Gastrocnemius medialis (tissue), 4 donors: ENCODE measurements at regions of chr11 and their contacts with region 1.

Region 1: GRCh38 chr11:2885676-2886081 is at the start of gene CDKN1C:
- DNase-seq: peak; percentile 63 to 82
- ATAC-seq: peak; percentile 76 to 80
- H3K4me3 ChIP-seq: peak within 1 kb of the TSS; percentile 67 to 95 (median 82)
- H3K27ac ChIP-seq: peak within 1 kb of the TSS; percentile 75 to 87 (median 87)
- H3K4me1 ChIP-seq: peaks cover 14 to 26% of the 10 kb centered on the region in 2 donors
- H3K27me3 ChIP-seq: no peaks in the 10 kb centered on the region
- CTCF ChIP-seq: no peak
- POLR2A ChIP-seq: peak; percentile 85 to 95
- total RNA-seq, gene CDKN1C: 22.0 to 56.9 (median 38.5) TPM

Region 2: DNA sequence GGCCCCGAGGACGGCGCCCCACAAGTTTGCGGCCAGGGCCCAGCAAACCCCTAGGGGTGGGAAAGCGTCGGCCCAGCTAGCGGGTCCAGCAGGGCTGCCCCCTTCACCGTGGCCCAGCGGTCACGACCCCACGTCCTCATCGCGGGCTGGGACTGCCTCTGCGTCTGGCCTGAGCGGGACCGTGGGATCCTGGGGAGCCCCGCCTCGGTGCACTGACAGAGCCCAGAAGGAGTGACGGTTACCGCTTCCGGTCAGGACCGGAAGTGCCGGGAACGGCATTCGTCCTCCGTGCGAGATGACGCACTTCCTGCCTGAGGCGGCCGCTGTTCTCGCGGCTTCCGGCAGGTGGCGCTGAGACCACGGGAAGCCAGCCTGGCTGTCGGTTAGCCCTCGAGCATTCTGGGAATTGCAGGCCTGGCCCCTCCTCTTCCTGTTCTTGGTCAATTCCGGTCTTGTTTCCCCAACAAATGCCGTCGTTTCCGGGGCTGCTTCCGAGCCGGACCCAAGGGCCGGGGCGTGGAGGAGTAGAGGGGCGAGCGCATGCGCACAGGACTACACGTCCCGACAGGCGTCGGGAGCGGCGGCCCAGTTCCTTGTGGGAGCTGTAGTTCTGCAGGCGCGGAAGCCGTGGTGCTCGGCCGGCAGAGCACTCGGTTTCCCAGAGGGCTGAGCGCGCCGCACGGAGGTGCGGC is 485.5 kb before region 1 on chr11 and contains the start of gene TSSC4:
- in situ Hi-C with region 1: no loop called
- intact Hi-C with region 1: loop called (anchors 1 kb)
- DNase-seq: peak; percentile 100
- ATAC-seq: peak; percentile 96 to 97
- H3K4me3 ChIP-seq: peak within 1 kb of the TSS; percentile 84 to 100 (median 97)
- H3K27ac ChIP-seq: peak within 1 kb of the TSS; percentile 97 to 100 (median 98)
- H3K4me1 ChIP-seq: peaks cover 22 to 26% of the 10 kb centered on the region in 2 donors
- H3K27me3 ChIP-seq: no peaks in the 10 kb centered on the region
- CTCF ChIP-seq: peak; percentile 95 to 99 (median 98)
- POLR2A ChIP-seq: peak; percentile 91 to 97
- total RNA-seq, gene TSSC4: 53.4 to 92.5 (median 76.8) TPM

Region 3: GRCh38 chr11:2532704-2533586 is 352.7 kb before region 1 on chr11:
- in situ Hi-C with region 1: loop called in 3 of 4 experiments (anchors 5 kb)
- intact Hi-C with region 1: loop called (anchors 1 kb)
- DNase-seq: peak; percentile 69 to 76
- ATAC-seq: peak; percentile 80 to 87
- H3K4me3 ChIP-seq: peak overlapping the region in 3 of 4 donors; percentile 29 to 42 (median 42)
- H3K27ac ChIP-seq: peak overlapping the region in 1 of 4 donors; percentile 24
- H3K4me1 ChIP-seq: peaks cover 6 to 7% of the 10 kb centered on the region in 2 donors
- H3K27me3 ChIP-seq: no peaks in the 10 kb centered on the region
- CTCF ChIP-seq: peak; percentile 98 to 100 (median 99)
- POLR2A ChIP-seq: no peak

Region 4: DNA sequence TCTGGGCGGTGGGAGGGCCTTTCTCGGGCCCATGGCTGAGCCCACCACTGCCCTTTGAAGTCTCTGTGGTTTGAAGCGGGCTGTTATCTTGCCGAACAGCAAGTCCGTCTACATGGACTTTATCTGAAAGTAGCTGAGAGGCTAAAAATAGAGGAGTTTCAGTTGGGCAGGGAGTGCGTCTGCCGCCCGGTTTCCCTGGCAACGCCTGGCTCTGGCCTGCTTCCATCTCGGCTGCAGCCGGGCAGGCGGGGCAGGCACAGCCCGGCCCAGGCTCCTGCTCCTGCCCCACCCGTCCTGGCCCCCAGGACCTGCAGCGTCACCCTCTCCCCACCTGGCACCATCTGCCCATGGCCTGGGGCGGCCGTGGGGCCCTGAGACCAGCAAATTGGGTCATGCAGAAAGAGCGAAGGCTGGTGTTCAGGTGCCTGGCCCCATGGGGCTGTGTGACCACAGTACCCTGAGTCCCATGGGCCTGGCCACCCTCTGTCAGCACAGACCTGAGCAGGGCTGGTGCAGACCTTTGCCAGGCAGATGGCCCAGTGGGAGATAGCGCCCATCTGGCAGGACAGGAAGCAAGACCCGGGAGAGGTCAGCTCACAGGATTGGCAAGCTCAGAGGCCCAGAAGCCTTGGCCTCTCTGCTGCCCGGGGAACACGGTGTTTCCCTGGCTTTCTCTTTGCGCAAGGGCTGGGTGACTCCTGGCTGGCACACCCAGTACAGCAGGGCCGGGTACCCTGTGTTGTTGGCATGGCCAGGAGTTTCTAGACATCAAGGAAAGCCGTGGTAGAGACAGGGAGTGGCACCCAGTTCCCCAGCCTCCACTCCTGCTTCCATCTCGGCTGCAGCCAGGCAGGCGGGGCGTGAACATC is 106.8 kb before region 1 on chr11:
- in situ Hi-C with region 1: no loop called
- intact Hi-C with region 1: loop called (anchors 1 kb)
- DNase-seq: peak; percentile 89 to 95
- ATAC-seq: peak; percentile 94 to 96
- H3K4me3 ChIP-seq: peak overlapping the region; percentile 24 to 51 (median 42)
- H3K27ac ChIP-seq: peak overlapping the region; percentile 82 to 96 (median 87)
- H3K4me1 ChIP-seq: peaks cover 24 to 27% of the 10 kb centered on the region in 2 donors
- H3K27me3 ChIP-seq: no peaks in the 10 kb centered on the region
- CTCF ChIP-seq: peak; percentile 28 to 44 (median 41)
- POLR2A ChIP-seq: no peak

Region 5: DNA sequence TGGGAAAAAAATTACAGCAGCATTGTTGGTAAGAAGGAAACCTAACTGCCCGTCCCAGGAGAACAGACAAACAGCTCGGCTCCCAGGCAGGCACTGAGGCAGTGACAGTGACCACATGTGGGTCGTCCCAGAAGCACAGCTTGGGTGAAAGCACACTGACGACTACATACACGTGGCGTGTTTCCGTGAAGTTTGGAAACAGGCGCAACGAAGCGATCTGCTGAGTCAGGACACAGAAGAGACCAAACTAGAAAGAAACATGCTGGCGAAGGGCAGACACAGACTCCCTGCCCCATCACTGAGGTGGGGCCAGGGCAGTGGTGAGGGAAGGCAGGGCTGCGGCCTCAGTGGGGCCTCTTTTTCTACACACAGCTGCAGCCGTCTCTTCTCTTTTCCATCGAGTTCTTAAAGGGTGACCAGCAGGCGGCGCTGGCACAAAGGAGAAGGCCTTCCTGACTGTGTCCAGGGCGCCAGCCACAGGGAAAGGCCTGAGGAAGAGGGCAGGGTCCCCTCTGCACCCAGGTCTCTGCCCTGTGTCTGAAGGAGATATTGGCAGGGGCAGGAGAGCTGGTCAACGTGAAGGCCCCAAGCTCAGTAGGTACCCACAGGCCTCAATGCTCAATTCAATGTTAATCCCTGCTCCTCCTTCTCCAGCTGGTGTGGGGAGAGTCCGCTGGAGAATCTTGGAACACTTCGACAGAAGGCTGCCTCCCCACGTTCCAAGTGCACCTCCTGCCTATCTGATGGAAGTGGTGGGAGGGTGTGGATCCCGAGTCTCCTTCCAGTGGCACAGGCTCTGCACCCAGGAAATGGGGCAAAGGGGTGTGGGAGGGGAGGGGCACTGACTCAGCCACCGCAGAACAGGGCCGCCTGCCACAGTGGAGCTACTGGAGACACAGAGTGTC is 151.6 kb after region 1 on chr11:
- in situ Hi-C with region 1: no loop called
- intact Hi-C with region 1: no loop called
- DNase-seq: peak; percentile 48 to 74
- ATAC-seq: no peak
- H3K4me3 ChIP-seq: no peak overlapping the region
- H3K27ac ChIP-seq: peak overlapping the region in 2 of 4 donors; percentile 1 to 40
- H3K4me1 ChIP-seq: peaks cover 11 to 13% of the 10 kb centered on the region in 2 donors
- H3K27me3 ChIP-seq: no peaks in the 10 kb centered on the region
- CTCF ChIP-seq: peak; percentile 77 to 94 (median 84)
- POLR2A ChIP-seq: no peak

Region 6: GRCh38 chr11:3160252-3161031 is 274.8 kb after region 1 on chr11:
- in situ Hi-C with region 1: no loop called
- intact Hi-C with region 1: loop called (anchors 1 kb)
- DNase-seq: peak; percentile 68 to 78
- ATAC-seq: peak; percentile 71 to 74
- H3K4me3 ChIP-seq: peak overlapping the region; percentile 57 to 68 (median 64)
- H3K27ac ChIP-seq: peak overlapping the region; percentile 71 to 81 (median 80)
- H3K4me1 ChIP-seq: peaks cover 59 to 67% of the 10 kb centered on the region in 2 donors
- H3K27me3 ChIP-seq: no peaks in the 10 kb centered on the region
- CTCF ChIP-seq: no peak
- POLR2A ChIP-seq: no peak